Astrocyte of the cerebellum (primary cell): ENCODE measurements at regions of chr18 and their contacts with region 1.

Region 1: GRCh38 chr18:9184998-9185613 is 48.5 kb downstream of the ANKRD12 start:
- DNase-seq: no peak
- H3K4me3 ChIP-seq: no peak overlapping the region
- CTCF ChIP-seq: no peak

Region 2: GRCh38 chr18:9136315-9137155 is 48.6 kb before region 1 on chr18 and contains the start of gene ANKRD12:
- in situ Hi-C with region 1: loop called (anchors 5 kb)
- DNase-seq: peak; percentile 90
- H3K4me3 ChIP-seq: peak within 1 kb of the TSS; percentile 64
- CTCF ChIP-seq: no peak